ENCODE measurements at regions of chr18 and their contacts with region 1.

Region 1: GRCh38 chr18:41025666-41026065 is 929.4 kb upstream of the PIK3C3 start:
- DNase-seq: peak; percentile 57
- ATAC-seq: peak; percentile 92
- H3K4me3 ChIP-seq: no peak overlapping the region
- H3K27ac ChIP-seq: no peak overlapping the region
- H3K4me1 ChIP-seq: peaks cover 3% of the 10 kb centered on the region; the same call in 1 of the 2 replicates
- H3K27me3 ChIP-seq: no peaks in the 10 kb centered on the region
- CTCF ChIP-seq: no peak
- EP300 ChIP-seq: peak; percentile 33 to 85; a peak in 2 of 4 replicates
- POLR2A ChIP-seq: no peak
- RAD21 ChIP-seq: no peak

Region 2: DNA sequence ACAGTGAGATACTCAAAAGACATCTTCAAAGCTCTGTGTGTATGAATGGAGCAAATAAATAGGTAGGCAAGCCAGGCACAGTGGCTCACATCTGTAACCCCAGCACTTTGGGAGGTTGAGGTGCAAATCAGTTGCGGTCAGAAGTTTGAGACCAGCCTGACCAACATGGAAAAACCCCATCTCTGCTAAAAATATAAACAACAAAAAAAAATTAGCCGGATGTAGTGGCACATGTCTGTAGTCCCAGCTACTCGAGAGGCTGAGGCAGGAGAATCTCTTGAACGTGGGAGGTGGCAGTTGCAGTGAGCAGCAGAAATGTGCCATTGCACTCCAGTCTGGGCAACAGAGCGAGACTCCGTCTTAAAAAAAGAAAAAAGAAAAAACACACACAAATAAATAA is 15.7 kb before region 1 on chr18:
- CTCF ChIA-PET with region 1: interaction called, 3 read pairs
- POLR2A ChIA-PET with region 1: interaction called, 3 read pairs
- RAD21 ChIA-PET with region 1: interaction called, 4 read pairs
- SMC1A ChIA-PET with region 1: interaction called, 19 read pairs
- in situ Hi-C with region 1: no loop called
- intact Hi-C with region 1: no loop called
- DNase-seq: peak; percentile 33
- ATAC-seq: peak; percentile 96
- H3K4me3 ChIP-seq: no peak overlapping the region
- H3K27ac ChIP-seq: no peak overlapping the region
- H3K4me1 ChIP-seq: no peaks in the 10 kb centered on the region; the same call in 1 of the 2 replicates
- H3K27me3 ChIP-seq: no peaks in the 10 kb centered on the region
- CTCF ChIP-seq: no peak
- EP300 ChIP-seq: peak in 1 of 2 experiments; percentile 53; a peak in 1 of 4 replicates
- POLR2A ChIP-seq: no peak
- RAD21 ChIP-seq: no peak

Region 3: GRCh38 chr18:41237317-41237716 is 211.7 kb after region 1 on chr18:
- CTCF ChIA-PET with region 1: no interaction called
- POLR2A ChIA-PET with region 1: no interaction called
- RAD21 ChIA-PET with region 1: no interaction called
- SMC1A ChIA-PET with region 1: no interaction called
- in situ Hi-C with region 1: no loop called
- intact Hi-C with region 1: no loop called
- DNase-seq: no peak
- ATAC-seq: no peak
- H3K4me3 ChIP-seq: no peak overlapping the region
- H3K27ac ChIP-seq: no peak overlapping the region
- H3K4me1 ChIP-seq: no peaks in the 10 kb centered on the region
- H3K27me3 ChIP-seq: no peaks in the 10 kb centered on the region
- CTCF ChIP-seq: no peak
- EP300 ChIP-seq: no peak
- POLR2A ChIP-seq: no peak
- RAD21 ChIP-seq: no peak

Measured in GM12878 (cell line).